AG04450 (cell line): ENCODE measurements at regions of chr14 and their contacts with region 1.

Region 1: DNA sequence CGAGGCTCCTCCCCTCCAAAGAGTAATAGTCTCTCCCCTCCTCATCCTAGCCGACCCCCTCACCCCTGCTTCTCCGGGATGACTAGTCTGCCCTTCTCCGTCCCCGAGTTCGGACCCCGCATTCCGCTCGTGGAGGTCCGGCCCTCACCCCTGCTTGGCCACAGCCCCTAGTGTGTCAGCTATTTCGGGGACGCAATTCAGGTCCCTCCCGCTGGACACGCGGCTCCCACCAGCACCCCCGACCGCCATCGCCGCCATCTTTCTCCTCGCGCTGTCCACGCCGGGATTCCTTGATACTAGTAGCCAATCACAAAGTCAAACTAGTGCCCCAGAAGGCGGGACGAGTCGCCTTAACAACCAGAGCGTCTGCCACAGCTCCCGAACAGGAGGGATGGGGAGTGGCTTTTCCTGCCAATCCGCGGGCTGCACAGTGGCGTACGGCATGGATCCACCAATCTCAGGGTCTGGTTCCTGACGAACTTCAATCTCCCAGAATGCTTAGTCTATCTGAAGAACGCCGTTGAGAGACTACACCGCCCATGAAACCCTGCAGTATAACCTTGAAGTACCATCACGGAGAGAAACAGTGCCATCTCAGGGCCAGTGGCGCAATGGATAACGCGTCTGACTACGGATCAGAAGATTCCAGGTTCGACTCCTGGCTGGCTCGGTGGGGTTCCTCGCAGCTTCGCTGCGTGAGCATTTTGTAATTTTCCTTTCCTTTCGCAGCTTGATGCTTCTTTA is at the start of gene PRMT5:
- DNase-seq: peak; percentile 99
- H3K4me3 ChIP-seq: peak within 1 kb of the TSS; percentile 100
- H3K27ac ChIP-seq: peak within 1 kb of the TSS; percentile 71
- H3K27me3 ChIP-seq: no peaks in the 10 kb centered on the region
- CTCF ChIP-seq: no peak
- polyA plus RNA-seq, gene PRMT5: 125 and 133 TPM in 2 replicates

Region 2: GRCh38 chr14:22887260-22887989 is 41.9 kb before region 1 on chr14:
- CTCF ChIA-PET with region 1: no interaction called
- POLR2A ChIA-PET with region 1: no interaction called
- DNase-seq: no peak
- H3K4me3 ChIP-seq: peak overlapping the region; percentile 63
- H3K27ac ChIP-seq: peak overlapping the region; percentile 65
- H3K27me3 ChIP-seq: no peaks in the 10 kb centered on the region
- CTCF ChIP-seq: no peak

Region 3: DNA sequence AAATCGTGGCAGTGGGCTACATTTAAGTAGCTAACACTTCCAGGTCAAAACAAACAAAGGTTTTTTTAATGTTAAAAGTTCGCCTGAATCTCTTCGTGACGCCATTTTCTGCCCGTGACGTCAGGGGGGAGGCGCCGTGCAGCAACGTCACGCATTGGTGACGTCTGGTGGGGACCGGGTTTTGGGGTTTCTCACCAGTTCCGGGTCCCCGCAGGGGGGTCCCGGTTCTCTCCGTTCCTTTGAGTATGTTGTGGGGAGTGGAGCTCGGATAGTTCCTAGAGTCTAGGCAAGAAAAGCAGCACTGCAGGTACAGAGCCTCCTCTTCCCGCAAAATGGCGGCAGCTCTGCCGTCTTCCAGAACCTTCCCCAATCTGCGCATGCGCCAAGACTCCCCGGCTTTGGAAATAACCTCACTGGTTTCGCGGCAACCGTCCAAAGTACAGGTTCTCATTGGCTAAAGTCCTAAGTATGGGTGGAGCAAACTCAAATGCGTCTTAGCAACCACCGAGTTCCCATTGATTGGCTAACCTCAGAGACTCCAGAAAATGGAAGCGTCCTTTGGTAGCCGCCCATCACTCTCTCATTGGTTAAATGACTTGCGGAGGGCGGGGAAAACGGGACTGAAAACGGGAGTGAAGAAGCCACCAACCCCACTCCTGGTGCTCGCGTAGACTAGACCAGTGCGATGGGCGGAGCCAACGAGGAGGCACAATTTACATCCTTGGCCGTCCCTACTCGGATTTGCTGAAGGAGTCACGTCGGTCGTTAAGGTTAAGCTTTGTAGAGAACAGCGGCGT is 10.3 kb before region 1 on chr14 and contains the start of gene RBM23:
- CTCF ChIA-PET with region 1: interaction called, 36 read pairs
- POLR2A ChIA-PET with region 1: interaction called, 9 read pairs
- DNase-seq: peak; percentile 100
- H3K4me3 ChIP-seq: peak within 1 kb of the TSS; percentile 95
- H3K27ac ChIP-seq: peak within 1 kb of the TSS; percentile 99
- H3K27me3 ChIP-seq: no peaks in the 10 kb centered on the region
- CTCF ChIP-seq: no peak
- polyA plus RNA-seq, gene RBM23: 46.2 and 47.2 TPM in 2 replicates

Region 4: GRCh38 chr14:22939684-22940083 is 10.4 kb after region 1 on chr14:
- CTCF ChIA-PET with region 1: interaction called, 13 read pairs
- POLR2A ChIA-PET with region 1: interaction called, 3 read pairs
- DNase-seq: peak; percentile 30
- H3K4me3 ChIP-seq: no peak overlapping the region
- H3K27ac ChIP-seq: peak overlapping the region; percentile 31
- H3K27me3 ChIP-seq: no peaks in the 10 kb centered on the region
- CTCF ChIP-seq: no peak

Region 5: GRCh38 chr14:22945642-22946041 is 16.4 kb after region 1 on chr14:
- CTCF ChIA-PET with region 1: interaction called, 13 read pairs
- POLR2A ChIA-PET with region 1: interaction called, 5 read pairs
- DNase-seq: no peak
- H3K4me3 ChIP-seq: no peak overlapping the region
- H3K27ac ChIP-seq: no peak overlapping the region
- H3K27me3 ChIP-seq: no peaks in the 10 kb centered on the region
- CTCF ChIP-seq: no peak

Region 6: DNA sequence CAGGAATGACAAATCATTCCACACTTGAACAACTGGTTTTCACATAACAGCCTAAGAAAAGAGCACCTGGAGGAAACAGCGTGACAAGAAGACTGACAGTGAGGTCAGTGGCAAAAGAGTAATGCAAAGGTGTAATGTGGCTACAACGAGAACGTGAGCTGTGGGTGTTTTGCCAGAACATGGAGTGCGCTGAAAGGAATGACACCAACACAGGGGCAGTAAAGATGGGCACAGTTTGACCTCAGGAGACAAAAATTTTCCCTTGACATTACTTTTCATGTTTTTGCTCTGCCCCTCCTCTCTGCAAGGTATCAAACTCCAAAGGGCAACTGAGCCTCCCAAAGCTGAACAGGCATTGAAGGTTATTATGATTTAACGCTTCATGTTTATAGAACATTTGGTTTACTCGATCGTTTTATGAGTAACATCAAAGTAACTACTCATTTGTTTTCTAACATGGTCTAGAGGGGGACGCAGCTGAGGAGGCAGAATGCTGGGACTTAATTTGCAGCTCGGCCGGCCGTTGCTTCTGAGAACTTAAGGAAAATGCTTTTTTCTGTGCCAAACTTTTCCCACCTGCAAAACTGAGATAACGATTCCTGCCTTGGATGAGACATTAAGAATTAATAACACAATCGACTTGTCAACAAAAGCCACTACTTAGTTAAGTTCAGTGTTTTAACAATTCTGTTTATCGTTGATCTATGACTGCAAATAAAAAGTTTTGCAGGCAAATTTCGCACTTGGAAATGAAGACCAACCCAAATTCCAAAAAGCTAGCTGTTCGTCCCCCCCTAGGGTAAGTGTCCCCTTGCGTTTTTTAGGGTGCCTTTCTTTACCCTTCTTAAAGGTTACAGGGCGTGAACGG is 26.7 kb after region 1 on chr14:
- CTCF ChIA-PET with region 1: interaction called, 25 read pairs
- POLR2A ChIA-PET with region 1: no interaction called
- DNase-seq: no peak
- H3K4me3 ChIP-seq: peak overlapping the region; percentile 66
- H3K27ac ChIP-seq: peak overlapping the region; percentile 68
- H3K27me3 ChIP-seq: no peaks in the 10 kb centered on the region
- CTCF ChIP-seq: no peak

Region 7: GRCh38 chr14:22973217-22974032 is 44.1 kb after region 1 on chr14:
- CTCF ChIA-PET with region 1: interaction called, 16 read pairs
- POLR2A ChIA-PET with region 1: interaction called, 12 read pairs
- DNase-seq: no peak
- H3K4me3 ChIP-seq: no peak overlapping the region
- H3K27ac ChIP-seq: no peak overlapping the region
- H3K27me3 ChIP-seq: no peaks in the 10 kb centered on the region
- CTCF ChIP-seq: peak; percentile 68